ENCODE measurements at regions of chr4 and their contacts with region 1.

Region 1: DNA sequence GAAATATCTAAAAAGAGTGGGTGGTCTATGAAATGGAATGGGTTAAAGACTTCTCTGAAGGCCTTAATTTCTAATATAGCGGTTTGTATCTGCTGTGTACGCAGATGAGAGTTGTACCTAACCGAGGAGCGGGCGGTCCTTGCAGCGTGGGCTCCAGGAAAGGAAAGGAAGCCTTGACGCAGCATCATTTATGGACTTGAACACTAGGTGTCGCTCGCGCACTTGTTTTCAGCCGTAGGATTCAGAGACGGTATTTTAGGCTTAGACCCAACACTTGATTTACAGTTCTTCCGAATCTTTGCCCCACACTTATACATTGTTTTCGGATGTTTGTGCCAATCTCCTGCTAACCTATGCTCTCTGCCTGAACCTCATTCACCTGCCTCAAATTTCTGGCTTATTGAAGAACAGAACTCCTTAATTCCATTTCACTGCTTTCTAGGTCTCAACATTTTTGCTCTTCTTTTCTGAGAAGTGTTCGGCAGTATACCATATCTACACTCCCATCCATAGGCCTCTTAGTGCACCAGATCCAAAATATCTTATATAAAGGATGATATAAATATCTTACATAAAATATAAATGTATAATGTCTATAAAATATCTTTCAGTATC is 48.9 kb upstream of the AADAT start:
- DNase-seq: peak; percentile 75
- H3K4me3 ChIP-seq: no peak overlapping the region
- H3K27ac ChIP-seq: no peak overlapping the region
- H3K4me1 ChIP-seq: no peaks in the 10 kb centered on the region
- H3K27me3 ChIP-seq: no peaks in the 10 kb centered on the region
- CTCF ChIP-seq: peak; percentile 65

Region 2: DNA sequence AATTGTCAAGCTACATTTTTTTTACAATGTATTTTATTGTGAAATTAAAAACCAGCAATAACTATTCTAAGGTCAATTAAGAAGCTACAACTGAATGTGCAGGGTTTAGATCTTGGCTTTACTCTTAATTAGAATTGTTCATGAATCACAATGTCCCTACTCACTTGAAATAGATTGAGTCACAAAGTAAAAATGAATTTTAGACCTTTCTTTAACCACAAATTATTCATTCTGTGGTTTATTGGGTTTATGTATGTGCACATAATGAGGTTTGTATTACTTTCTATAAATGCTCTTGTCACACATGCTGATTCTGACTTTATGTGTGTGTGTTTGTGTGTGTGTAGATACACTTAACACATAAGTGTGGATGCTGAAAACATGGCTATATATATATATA is 598.0 kb after region 1 on chr4:
- intact Hi-C with region 1: no loop called
- DNase-seq: no peak
- H3K4me3 ChIP-seq: no peak overlapping the region
- H3K27ac ChIP-seq: no peak overlapping the region
- H3K4me1 ChIP-seq: no peaks in the 10 kb centered on the region
- H3K27me3 ChIP-seq: no peaks in the 10 kb centered on the region
- CTCF ChIP-seq: no peak

Region 3: DNA sequence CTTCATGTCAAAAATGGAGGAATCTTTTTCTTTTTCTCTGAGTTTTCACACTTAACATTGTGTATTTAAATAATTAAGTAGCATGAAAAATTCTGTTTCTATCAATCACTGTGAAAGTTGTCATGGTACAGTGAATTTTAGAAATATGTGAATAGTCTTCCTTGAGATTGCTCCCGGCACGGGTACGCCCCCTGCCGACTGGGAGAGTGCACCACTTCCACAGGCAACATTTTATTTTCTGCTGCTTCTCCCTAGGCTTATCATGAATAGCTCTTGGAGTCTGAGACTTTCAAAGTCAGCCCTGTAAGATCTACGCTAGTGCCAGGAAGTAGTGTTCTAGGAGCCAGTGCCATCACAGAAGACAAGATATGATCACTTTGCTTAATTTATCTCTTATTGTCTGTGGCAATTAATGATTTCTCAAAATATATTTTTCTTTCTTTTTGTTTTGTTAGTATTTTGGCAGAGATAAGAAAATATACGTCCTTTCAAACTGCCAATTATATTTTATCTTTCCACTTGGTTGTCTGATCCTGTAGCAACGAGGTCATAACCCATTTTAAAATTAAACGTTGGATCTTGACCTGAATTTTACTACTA is 714.8 kb after region 1 on chr4:
- intact Hi-C with region 1: loop called (anchors 5 kb)
- DNase-seq: peak; percentile 37
- H3K4me3 ChIP-seq: no peak overlapping the region
- H3K27ac ChIP-seq: no peak overlapping the region
- H3K4me1 ChIP-seq: no peaks in the 10 kb centered on the region
- H3K27me3 ChIP-seq: no peaks in the 10 kb centered on the region
- CTCF ChIP-seq: peak; percentile 41